CD4-positive, alpha-beta memory T cell (primary cell): ENCODE measurements at regions of chr14 and their contacts with region 1.

Region 1: DNA sequence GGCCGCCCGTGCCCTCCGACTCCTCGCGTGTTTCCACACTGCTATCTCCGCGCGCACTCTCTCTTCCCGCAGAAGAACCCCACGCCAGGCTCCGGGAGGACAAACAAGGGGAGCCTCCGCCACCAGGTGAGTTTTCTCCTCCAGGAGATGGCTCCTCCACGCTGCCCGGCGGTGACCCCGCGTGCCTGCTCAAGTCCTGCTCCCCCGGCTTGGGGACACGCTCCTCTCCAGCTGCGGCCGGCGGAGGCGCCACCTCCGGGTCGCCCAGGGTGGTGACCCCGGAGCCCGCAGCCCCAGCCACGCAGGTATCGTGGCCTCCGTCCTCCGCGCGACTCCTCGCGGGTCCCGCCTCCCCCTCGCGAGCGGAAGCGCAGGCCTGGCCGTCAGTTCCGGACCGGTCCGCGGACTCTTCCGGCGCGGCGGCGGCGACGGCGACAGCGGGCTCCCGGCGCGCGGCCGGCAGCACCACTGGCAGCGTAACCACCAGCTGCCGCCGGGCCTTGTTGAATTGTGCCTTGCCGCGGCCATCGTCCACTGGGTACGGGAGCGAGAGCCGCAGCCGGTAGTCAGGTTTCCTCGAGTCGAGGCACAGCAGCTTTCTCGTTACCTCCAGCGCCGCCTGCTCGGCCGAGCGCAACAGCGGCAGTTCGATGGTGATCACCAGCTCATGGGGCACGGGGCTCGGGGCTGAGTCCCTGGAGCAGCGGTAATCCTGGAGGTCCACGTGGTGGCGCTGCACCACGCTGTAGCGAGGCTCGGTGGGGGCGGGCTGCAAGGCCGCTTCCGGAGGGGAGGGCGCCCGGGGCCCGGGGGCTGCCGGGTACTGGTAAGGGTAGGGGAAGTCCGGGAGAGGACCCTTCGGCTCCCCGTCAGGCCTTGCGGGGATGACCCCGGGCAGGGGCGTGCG is 1.2 kb downstream of the DNAAF2 start:
- DNase-seq: peak; percentile 92 to 95 (median 94)
- H3K4me3 ChIP-seq: peak overlapping the region; percentile 90 to 99
- H3K4me3 Mint-ChIP-seq: peak overlapping the region; percentile 95 to 100 (median 97)
- H3K27ac ChIP-seq: peak overlapping the region; percentile 99
- H3K27ac Mint-ChIP-seq: peak overlapping the region; percentile 92 to 100 (median 96)
- H3K4me1 ChIP-seq: peaks cover 48% of the 10 kb centered on the region
- H3K4me1 Mint-ChIP-seq: peaks cover 26 to 75% (median 43%) of the 10 kb centered on the region in 4 donors
- H3K27me3 ChIP-seq: no peaks in the 10 kb centered on the region
- H3K27me3 Mint-ChIP-seq: peaks cover 0 to 1% of the 10 kb centered on the region in 2 donors

Region 2: GRCh38 chr14:49461529-49462401 is 172.1 kb before region 1 on chr14:
- CTCF ChIA-PET with region 1: interaction called, 3 read pairs
- POLR2A ChIA-PET with region 1: interaction called, 5 read pairs
- intact Hi-C with region 1: loop called (anchors 5 kb)
- DNase-seq: peak; percentile 63 to 68 (median 67)
- H3K4me3 ChIP-seq: no peak overlapping the region
- H3K4me3 Mint-ChIP-seq: no peak overlapping the region
- H3K27ac ChIP-seq: no peak overlapping the region
- H3K27ac Mint-ChIP-seq: no peak overlapping the region
- H3K4me1 ChIP-seq: no peaks in the 10 kb centered on the region
- H3K4me1 Mint-ChIP-seq: no peaks in the 10 kb centered on the region
- H3K27me3 ChIP-seq: no peaks in the 10 kb centered on the region
- H3K27me3 Mint-ChIP-seq: peaks cover 2 to 3% of the 10 kb centered on the region in 2 donors

Region 3: GRCh38 chr14:49598485-49599300 is 35.2 kb before region 1 on chr14 and contains the start of gene LRR1:
- CTCF ChIA-PET with region 1: interaction called, 14 read pairs
- POLR2A ChIA-PET with region 1: interaction called, 43 read pairs
- intact Hi-C with region 1: loop called (anchors 1 kb)
- DNase-seq: peak; percentile 84 to 93 (median 87)
- H3K4me3 ChIP-seq: peak within 1 kb of the TSS; percentile 70 to 97
- H3K4me3 Mint-ChIP-seq: peak within 1 kb of the TSS; percentile 92 to 100 (median 98)
- H3K27ac ChIP-seq: peak within 1 kb of the TSS; percentile 90
- H3K27ac Mint-ChIP-seq: peak within 1 kb of the TSS; percentile 93 to 99 (median 98)
- H3K4me1 ChIP-seq: peaks cover 9% of the 10 kb centered on the region
- H3K4me1 Mint-ChIP-seq: peaks cover 9 to 38% (median 25%) of the 10 kb centered on the region in 4 donors
- H3K27me3 ChIP-seq: no peaks in the 10 kb centered on the region
- H3K27me3 Mint-ChIP-seq: no peaks in the 10 kb centered on the region
- total RNA-seq, gene LRR1: 13.6 to 16.1 TPM

Region 4: DNA sequence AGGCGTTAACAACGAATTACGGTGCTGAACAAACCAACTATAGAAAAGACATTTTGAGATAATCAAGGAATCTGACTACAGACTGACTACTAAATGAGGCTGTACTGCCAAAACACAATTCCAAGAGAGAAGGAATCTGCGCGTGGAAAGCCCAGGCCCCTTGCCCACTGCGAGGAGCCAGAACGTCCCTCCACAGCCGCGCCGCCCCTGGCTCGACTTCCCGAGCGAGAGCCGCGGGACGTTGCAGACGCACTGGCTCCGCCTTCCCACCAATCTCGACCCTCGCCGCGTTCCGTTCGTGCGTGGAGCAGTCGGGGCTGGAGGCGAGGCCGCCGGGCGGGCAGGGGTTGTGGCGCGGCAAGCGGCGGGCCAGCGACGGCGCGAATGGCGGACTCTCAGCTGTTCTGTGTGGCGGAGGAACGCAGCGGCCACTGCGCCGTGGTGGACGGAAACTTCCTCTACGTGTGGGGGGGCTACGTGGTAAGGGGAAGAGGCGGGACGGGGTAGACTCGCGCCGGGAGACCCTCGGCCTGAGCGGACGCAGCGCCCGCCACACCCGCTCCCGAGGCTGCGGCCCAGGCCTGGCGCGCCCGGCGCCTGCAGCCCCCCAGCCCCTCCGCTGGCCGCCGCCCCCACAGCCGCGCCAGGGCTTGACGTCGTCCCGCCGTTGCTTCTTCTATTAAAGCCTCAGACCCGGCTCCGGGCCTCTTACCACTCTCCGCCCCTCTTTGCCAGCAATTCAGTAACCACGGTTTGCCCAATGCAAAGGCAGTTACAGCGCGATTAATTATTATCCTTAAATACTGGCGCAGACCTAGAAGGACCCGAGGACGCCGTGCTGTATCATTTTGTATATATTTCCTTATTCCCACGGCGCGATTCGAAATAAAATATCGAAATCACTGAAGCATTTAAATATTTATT is 59.2 kb after region 1 on chr14 and contains the start of gene KLHDC1:
- CTCF ChIA-PET with region 1: interaction called, 11 read pairs
- POLR2A ChIA-PET with region 1: interaction called, 33 read pairs
- intact Hi-C with region 1: loop called (anchors 1 kb)
- DNase-seq: peak; percentile 77 to 83 (median 79)
- H3K4me3 ChIP-seq: peak within 1 kb of the TSS; percentile 49 to 72
- H3K4me3 Mint-ChIP-seq: peak within 1 kb of the TSS; percentile 87 to 99 (median 90)
- H3K27ac ChIP-seq: peak within 1 kb of the TSS; percentile 64
- H3K27ac Mint-ChIP-seq: peak within 1 kb of the TSS; percentile 77 to 96 (median 93)
- H3K4me1 ChIP-seq: peaks cover 23% of the 10 kb centered on the region
- H3K4me1 Mint-ChIP-seq: peaks cover 23 to 38% (median 25%) of the 10 kb centered on the region in 4 donors
- H3K27me3 ChIP-seq: no peaks in the 10 kb centered on the region
- H3K27me3 Mint-ChIP-seq: no peaks in the 10 kb centered on the region
- total RNA-seq, gene KLHDC1: 12.9 to 13.6 TPM

Region 5: DNA sequence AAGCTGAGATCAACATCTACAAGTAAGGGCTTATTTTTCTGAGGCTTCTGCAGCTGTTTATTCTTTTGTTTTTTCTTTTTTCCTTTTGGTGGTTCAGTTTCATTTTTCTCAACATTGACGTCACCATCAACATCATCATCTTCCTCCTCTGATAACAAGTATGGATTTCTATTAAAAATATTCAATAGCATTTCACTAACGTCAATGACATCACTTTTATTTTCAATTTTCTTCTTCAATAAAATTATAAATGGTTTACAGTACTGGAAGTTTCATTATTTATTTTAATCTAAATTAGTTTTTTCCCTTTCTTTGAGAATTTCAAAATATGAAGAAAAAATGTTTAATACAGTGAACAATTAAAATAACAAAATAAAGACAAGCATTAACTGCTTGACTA is 194.7 kb after region 1 on chr14:
- CTCF ChIA-PET with region 1: interaction called, 34 read pairs
- POLR2A ChIA-PET with region 1: interaction called, 16 read pairs
- intact Hi-C with region 1: loop called (anchors 1 kb)
- DNase-seq: no peak
- H3K4me3 ChIP-seq: no peak overlapping the region
- H3K4me3 Mint-ChIP-seq: no peak overlapping the region
- H3K27ac ChIP-seq: no peak overlapping the region
- H3K27ac Mint-ChIP-seq: no peak overlapping the region
- H3K4me1 ChIP-seq: no peaks in the 10 kb centered on the region
- H3K4me1 Mint-ChIP-seq: peaks cover 0 to 9% (median 2%) of the 10 kb centered on the region in 4 donors
- H3K27me3 ChIP-seq: no peaks in the 10 kb centered on the region
- H3K27me3 Mint-ChIP-seq: no peaks in the 10 kb centered on the region

Region 6: DNA sequence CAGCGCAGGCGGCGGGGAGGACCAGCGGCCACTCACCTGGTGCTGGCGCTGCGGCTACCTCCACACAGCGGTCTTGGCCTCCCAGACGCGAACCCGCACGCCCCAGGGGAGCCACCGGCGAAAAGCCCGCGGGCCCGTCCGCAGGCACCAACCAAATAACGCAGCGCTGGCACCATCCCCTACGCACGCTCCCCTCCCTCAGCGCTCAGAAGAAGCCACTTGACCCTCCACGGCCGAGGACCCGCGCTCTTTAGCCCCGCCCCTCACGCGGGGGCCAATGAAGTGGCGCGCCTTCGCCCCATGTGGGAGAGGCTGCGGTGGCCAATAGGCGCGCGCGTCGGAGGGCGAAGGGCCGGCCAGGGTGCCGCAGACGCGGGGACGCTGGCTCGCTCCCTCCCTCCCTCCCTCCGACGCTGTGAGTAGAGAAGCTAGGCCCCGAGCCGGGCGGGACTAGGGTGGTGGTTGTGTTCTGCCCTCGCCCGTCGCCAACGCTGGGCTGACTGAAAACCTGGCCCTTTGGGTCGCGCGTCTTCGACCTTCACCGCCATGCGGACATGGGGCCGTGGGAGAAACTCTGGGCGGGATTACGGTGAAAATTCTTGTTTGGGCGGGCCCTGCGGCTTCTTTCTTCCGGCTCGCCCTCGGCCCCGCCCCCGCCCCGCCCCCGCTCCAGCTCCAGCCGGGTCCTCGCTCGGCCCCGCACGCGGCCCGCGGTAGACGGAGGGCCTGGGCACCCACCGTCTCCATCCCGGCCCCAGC is 678.3 kb after region 1 on chr14 and contains the starts of genes DMAC2L and L2HGDH:
- CTCF ChIA-PET with region 1: no interaction called
- POLR2A ChIA-PET with region 1: interaction called, 4 read pairs
- intact Hi-C with region 1: loop called (anchors 1 kb)
- DNase-seq: peak; percentile 86 to 91 (median 89)
- H3K4me3 ChIP-seq: peak within 1 kb of the TSS; percentile 77 to 92
- H3K4me3 Mint-ChIP-seq: peak within 1 kb of the TSS; percentile 91 to 98 (median 97)
- H3K27ac ChIP-seq: peak within 1 kb of the TSS; percentile 76
- H3K27ac Mint-ChIP-seq: peak within 1 kb of the TSS; percentile 92 to 99 (median 99)
- H3K4me1 ChIP-seq: peaks cover 30% of the 10 kb centered on the region
- H3K4me1 Mint-ChIP-seq: peaks cover 30 to 47% (median 34%) of the 10 kb centered on the region in 4 donors
- H3K27me3 ChIP-seq: no peaks in the 10 kb centered on the region
- H3K27me3 Mint-ChIP-seq: no peaks in the 10 kb centered on the region
- total RNA-seq, gene DMAC2L: 15.9 to 19.5 TPM
- total RNA-seq, gene L2HGDH: 4.9 to 5.5 TPM